ENCODE measurements at regions of chr17 and their contacts with region 1.

Region 1: DNA sequence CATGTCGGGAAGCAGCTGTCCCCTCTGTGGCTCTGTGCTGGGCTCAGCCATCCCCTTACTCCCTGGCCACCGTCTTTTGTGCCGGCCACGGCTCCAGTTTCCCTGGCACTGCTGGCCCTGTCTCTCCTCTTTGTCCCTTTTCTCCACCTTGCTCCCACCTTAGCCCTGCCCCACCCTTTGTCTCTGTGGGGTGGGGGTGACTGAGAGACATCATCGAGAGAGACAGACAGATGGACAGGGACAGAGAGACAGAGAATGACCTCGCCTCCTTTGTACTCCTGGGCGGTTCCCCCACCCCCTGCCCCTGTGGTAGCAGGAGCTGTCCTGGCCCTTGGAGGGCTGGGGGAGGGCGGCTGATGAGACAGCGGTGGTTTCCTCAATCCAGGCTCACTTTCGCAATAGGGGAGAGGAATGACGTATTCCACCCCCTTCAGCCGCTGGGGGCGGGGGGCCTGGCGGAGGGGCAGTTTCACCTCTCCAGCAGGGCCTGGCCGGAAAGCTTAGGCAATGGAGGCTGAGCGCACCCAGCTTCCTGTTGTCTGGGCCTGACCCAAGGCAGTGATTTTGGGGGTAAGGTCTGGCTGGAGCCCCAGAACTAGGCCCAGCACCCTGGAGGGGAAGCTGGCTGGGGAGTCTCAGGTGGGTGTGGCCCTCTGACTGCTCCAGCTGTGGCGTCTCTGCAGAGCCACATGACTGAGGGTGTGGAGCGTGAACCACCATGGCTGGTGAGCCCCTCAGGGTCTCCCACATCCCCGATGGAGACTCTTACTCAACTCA is 7.3 kb downstream of the FMNL1 start:
- DNase-seq: peak; percentile 81
- H3K4me3 Mint-ChIP-seq: peak overlapping the region; percentile 99
- H3K27ac Mint-ChIP-seq: peak overlapping the region; percentile 97
- H3K4me1 Mint-ChIP-seq: peaks cover 94% of the 10 kb centered on the region
- H3K27me3 Mint-ChIP-seq: no peaks in the 10 kb centered on the region

Region 2: GRCh38 chr17:45270828-45271418 is 42.0 kb after region 1 on chr17:
- intact Hi-C with region 1: loop called (anchors 2 kb)
- DNase-seq: peak; percentile 29
- H3K4me3 Mint-ChIP-seq: no peak overlapping the region
- H3K27ac Mint-ChIP-seq: peak overlapping the region; percentile 18
- H3K4me1 Mint-ChIP-seq: peaks cover 20% of the 10 kb centered on the region
- H3K27me3 Mint-ChIP-seq: no peaks in the 10 kb centered on the region

Region 3: GRCh38 chr17:45677770-45678169 is 448.8 kb after region 1 on chr17:
- intact Hi-C with region 1: no loop called
- DNase-seq: no peak
- H3K4me3 Mint-ChIP-seq: no peak overlapping the region
- H3K27ac Mint-ChIP-seq: no peak overlapping the region
- H3K4me1 Mint-ChIP-seq: no peaks in the 10 kb centered on the region
- H3K27me3 Mint-ChIP-seq: peaks cover 12% of the 10 kb centered on the region